IMR-90 (cell line): ENCODE measurements at regions of chr10 and their contacts with region 1.

Region 1: GRCh38 chr10:100878291-100878910 is 34.4 kb upstream of the SLF2 start:
- DNase-seq: peak; percentile 77
- ATAC-seq: peak; percentile 94
- H3K4me3 ChIP-seq: no peak overlapping the region
- H3K27ac ChIP-seq: no peak overlapping the region
- H3K4me1 ChIP-seq: peaks cover 19% of the 10 kb centered on the region
- H3K27me3 ChIP-seq: no peaks in the 10 kb centered on the region
- CTCF ChIP-seq: peak; percentile 86
- POLR2A ChIP-seq: peak; percentile 50; the same call in 1 of the 2 replicates
- RAD21 ChIP-seq: peak; percentile 96

Region 2: DNA sequence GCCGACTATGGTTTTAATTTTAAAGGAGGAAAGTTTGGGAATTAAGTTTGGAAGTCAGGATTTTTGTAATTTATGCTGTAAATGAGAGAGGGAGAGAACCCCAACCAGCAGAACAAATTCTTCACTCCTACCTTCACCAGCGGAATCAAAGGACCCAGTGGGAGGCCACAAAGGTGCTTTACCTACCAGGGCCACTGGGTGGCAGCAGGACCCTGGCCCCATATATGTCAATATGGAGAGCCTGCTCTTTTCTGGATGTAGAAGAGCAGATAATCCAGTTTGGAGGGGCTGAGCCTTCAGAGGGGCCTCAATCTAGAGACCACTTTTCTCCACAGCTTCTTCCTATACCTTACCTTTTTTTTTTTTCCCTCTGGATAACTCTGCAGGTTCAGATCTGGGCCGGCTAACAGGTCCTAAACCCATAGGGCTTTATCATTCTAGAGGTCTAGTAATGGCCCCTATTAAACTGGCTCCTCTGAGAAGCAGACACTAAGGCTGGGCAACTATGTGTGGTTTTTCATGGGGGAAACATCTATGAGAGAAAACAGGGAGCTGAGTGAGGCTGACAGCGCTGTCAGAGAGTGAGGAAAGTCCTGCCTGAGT is 539.9 kb before region 1 on chr10:
- CTCF ChIA-PET with region 1: no interaction called
- POLR2A ChIA-PET with region 1: no interaction called
- dilution Hi-C with region 1: no loop called
- in situ Hi-C with region 1: loop called (anchors 25 kb)
- intact Hi-C with region 1: loop called (anchors 1 kb)
- DNase-seq: peak; percentile 45
- ATAC-seq: peak; percentile 81
- H3K4me3 ChIP-seq: no peak overlapping the region
- H3K27ac ChIP-seq: no peak overlapping the region
- H3K4me1 ChIP-seq: peaks cover 8% of the 10 kb centered on the region; the same call in 1 of the 2 replicates
- H3K27me3 ChIP-seq: peaks cover 18% of the 10 kb centered on the region
- CTCF ChIP-seq: peak; percentile 95
- POLR2A ChIP-seq: no peak
- RAD21 ChIP-seq: peak; percentile 97

Region 3: DNA sequence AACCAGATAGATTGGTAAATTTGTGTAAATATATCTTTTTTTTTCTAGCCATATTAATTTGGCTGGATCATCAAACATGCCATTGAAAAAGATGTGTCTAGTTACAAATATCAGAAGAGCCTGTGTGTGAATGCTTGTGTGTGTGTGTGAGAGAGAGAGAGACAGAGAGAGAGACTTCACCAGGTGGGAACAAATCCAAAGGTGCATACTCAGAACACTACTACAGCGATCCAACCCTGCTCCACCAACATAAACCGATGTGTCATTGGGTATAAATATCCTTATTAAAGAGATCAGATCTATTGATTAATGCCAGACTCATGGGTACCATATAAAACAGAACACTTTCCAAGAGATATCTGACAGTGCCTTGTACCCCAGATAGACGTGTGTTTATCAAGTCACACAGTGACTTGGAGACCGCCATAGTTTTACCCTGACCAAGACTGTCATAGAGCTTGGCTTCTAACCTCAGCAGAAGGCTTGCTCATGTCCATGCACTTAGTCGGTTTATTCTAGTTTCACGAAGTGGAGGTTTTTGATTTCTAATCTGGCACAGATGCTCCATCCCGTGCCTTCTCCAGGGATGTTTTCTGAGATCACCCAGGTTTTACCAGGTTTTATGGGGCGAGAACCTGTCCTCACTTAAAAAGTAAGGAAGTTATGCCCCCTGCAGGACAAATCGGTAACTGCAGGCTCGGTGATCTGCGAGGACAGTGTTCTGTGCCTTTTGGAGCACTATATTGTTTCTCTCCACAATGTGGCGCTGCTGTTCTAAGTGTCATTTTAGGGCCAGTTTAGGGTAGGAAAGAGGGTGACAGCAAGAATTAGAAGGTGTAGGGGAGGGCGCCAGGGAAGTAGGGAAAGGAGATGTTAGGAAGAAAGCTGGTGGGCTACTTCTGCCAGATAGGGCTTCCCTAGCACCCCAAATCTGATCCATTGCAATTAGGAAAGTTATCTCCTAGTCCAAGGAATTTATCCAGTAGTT is 444.9 kb before region 1 on chr10:
- CTCF ChIA-PET with region 1: no interaction called
- POLR2A ChIA-PET with region 1: no interaction called
- dilution Hi-C with region 1: no loop called
- in situ Hi-C with region 1: no loop called
- intact Hi-C with region 1: loop called (anchors 1 kb)
- DNase-seq: peak; percentile 89
- ATAC-seq: peak; percentile 99
- H3K4me3 ChIP-seq: no peak overlapping the region
- H3K27ac ChIP-seq: no peak overlapping the region
- H3K4me1 ChIP-seq: no peaks in the 10 kb centered on the region
- H3K27me3 ChIP-seq: peaks cover 3% of the 10 kb centered on the region; the same call in 1 of the 2 replicates
- CTCF ChIP-seq: peak; percentile 100; the same call in 1 of the 2 replicates
- POLR2A ChIP-seq: peak; percentile 66; the same call in 1 of the 2 replicates
- RAD21 ChIP-seq: peak; percentile 99

Region 4: GRCh38 chr10:100518761-100519241 is 359.6 kb before region 1 on chr10:
- CTCF ChIA-PET with region 1: interaction called, 5 read pairs
- POLR2A ChIA-PET with region 1: interaction called, 3 read pairs
- dilution Hi-C with region 1: no loop called
- in situ Hi-C with region 1: no loop called
- intact Hi-C with region 1: loop called (anchors 5 kb)
- DNase-seq: peak; percentile 70
- ATAC-seq: peak; percentile 67
- H3K4me3 ChIP-seq: no peak overlapping the region
- H3K27ac ChIP-seq: no peak overlapping the region
- H3K4me1 ChIP-seq: peaks cover 5% of the 10 kb centered on the region; the same call in 1 of the 2 replicates
- H3K27me3 ChIP-seq: no peaks in the 10 kb centered on the region
- CTCF ChIP-seq: peak; percentile 72
- POLR2A ChIP-seq: no peak
- RAD21 ChIP-seq: peak; percentile 66

Region 5: GRCh38 chr10:100562008-100562711 is 316.2 kb before region 1 on chr10:
- CTCF ChIA-PET with region 1: interaction called, 7 read pairs
- POLR2A ChIA-PET with region 1: no interaction called
- dilution Hi-C with region 1: no loop called
- in situ Hi-C with region 1: loop called (anchors 5 kb)
- intact Hi-C with region 1: loop called (anchors 1 kb)
- DNase-seq: peak; percentile 55
- ATAC-seq: peak; percentile 82
- H3K4me3 ChIP-seq: no peak overlapping the region
- H3K27ac ChIP-seq: no peak overlapping the region
- H3K4me1 ChIP-seq: peaks cover 2% of the 10 kb centered on the region
- H3K27me3 ChIP-seq: peaks cover 36% of the 10 kb centered on the region
- CTCF ChIP-seq: peak; percentile 94
- POLR2A ChIP-seq: no peak; the same call in 1 of the 2 replicates
- RAD21 ChIP-seq: peak; percentile 88

Region 6: DNA sequence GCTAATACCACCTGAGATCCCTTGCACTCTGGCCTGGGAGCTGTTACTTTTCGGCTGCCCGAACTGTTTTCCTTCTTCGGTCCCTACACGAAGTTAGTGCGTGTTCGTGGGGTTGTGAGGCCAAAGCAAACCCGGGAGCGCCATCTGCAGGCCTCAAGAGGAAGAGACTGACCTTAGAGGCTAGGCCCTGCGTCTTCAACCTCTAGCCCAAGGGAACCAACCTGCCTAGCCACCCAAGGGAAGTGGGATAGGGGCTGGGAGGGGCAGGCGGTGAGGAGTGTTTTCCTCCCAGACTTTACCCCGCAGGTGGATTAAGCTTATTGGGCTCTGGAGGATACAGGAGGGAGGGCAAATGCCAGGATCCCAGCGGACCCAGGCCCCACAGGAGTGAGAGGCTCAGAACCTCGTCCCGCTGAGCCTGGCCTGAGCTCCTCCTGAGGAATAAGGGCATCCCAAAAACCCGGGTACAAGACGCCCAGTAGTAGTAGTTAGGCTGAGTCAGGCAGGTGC is 134.7 kb before region 1 on chr10:
- CTCF ChIA-PET with region 1: no interaction called
- POLR2A ChIA-PET with region 1: no interaction called
- dilution Hi-C with region 1: no loop called
- in situ Hi-C with region 1: no loop called
- intact Hi-C with region 1: loop called (anchors 10 kb)
- DNase-seq: peak; percentile 55
- ATAC-seq: no peak
- H3K4me3 ChIP-seq: no peak overlapping the region
- H3K27ac ChIP-seq: no peak overlapping the region
- H3K4me1 ChIP-seq: no peaks in the 10 kb centered on the region
- H3K27me3 ChIP-seq: peaks cover 95% of the 10 kb centered on the region
- CTCF ChIP-seq: peak; percentile 58
- POLR2A ChIP-seq: no peak
- RAD21 ChIP-seq: peak; percentile 66